CD8-positive, alpha-beta T cell (primary cell): ENCODE measurements at regions of chr3 and their contacts with region 1.

Region 1: DNA sequence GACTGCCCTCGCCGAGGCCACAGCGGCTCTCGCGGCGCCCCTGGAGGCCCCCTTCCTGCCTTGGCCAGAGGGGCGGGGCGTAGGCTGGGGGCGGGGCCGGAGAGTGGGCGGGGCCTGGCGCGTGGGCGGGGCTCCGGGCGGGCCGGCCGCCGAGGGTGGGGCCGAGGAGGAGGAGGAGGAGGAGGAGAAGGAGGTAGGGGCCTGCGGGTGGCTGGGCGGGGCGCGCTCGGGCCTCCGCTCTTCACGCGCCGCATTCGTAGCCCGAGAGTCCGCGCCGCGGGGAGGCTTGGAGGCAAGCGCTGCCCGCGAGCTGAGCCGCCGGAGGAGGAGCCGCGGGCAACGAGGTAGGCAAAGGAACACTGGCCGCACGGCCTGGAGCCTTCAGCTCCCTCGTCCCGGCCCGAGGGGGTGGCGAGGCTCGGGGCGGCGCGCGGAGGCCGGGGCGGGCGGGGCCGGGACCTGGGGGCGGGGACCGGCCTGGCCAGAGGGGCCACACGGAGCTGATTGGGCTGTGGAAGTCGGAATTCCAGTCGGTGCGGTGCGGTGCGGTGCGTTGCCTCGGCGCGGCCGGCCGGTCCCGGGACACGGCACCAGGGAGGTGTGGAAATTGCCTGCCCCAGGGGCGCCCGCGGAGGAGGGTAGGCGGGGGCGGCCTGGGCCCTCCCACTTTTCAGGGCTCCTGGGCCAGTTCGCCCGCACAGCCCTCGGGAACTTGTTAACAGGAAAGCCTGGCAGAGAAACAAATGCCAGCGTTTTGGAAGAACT is at the start of gene PPP2R3A:
- DNase-seq: peak; percentile 40 to 83 (median 61)
- ATAC-seq: peak; percentile 93
- H3K4me3 ChIP-seq: peak within 1 kb of the TSS; percentile 61 to 63
- H3K4me3 Mint-ChIP-seq: peak within 1 kb of the TSS; percentile 81
- H3K27ac ChIP-seq: no peak within 1 kb of the TSS
- H3K27ac Mint-ChIP-seq: peak within 1 kb of the TSS; percentile 25
- H3K4me1 ChIP-seq: peaks cover 10% of the 10 kb centered on the region
- H3K4me1 Mint-ChIP-seq: peaks cover 12% of the 10 kb centered on the region
- H3K27me3 ChIP-seq: peaks cover 0 to 5% of the 10 kb centered on the region in 2 experiments
- H3K27me3 Mint-ChIP-seq: peaks cover 39% of the 10 kb centered on the region
- CTCF ChIP-seq: no peak
- total RNA-seq, gene PPP2R3A: 0.08 to 0.11 TPM

Region 2: DNA sequence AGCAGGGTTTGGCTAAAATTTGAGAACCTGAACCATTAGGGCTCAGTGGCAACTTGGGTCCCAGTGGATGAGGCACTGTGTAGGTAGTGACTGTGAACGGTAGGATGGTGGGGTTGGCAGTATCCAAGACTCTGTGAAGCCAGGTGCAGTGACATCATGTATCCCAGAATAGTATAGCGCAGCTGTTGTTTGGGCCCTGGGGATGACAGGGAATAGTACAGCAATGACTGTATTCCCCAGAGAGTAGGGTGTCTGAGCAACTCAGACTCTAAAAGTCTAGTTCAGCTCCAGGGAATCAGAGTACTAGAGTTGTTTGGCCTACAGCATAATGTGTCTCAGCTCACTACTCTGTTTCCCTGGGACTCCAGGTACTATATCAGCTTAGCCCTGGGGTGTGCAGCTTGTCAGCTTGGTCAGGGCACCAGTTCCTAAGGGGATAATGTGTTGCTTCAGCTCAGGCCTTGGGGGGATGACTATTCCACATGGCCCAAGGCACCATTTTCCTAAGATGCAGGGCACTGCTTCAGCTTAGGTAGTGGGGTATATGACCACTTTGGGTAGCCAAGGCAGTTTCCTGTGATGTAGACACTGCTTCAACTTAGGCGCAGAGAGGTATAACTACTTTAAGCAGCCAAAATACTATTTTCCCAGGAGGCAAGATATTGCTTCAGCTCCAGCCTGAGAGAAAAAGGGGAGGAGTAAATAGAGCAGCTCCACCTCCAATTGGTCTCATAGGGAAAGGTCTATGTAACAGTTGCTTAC is 20.7 kb before region 1 on chr3:
- CTCF ChIA-PET with region 1: no interaction called
- POLR2A ChIA-PET with region 1: interaction called, 3 read pairs
- intact Hi-C with region 1: loop called in 1 of 2 experiments (anchors 1 kb)
- DNase-seq: no peak
- ATAC-seq: no peak
- H3K4me3 ChIP-seq: no peak overlapping the region
- H3K4me3 Mint-ChIP-seq: no peak overlapping the region
- H3K27ac ChIP-seq: no peak overlapping the region
- H3K27ac Mint-ChIP-seq: no peak overlapping the region
- H3K4me1 ChIP-seq: no peaks in the 10 kb centered on the region
- H3K4me1 Mint-ChIP-seq: no peaks in the 10 kb centered on the region
- H3K27me3 ChIP-seq: no peaks in the 10 kb centered on the region
- H3K27me3 Mint-ChIP-seq: peaks cover 24% of the 10 kb centered on the region
- CTCF ChIP-seq: no peak

Region 3: GRCh38 chr3:136109499-136109898 is 143.8 kb after region 1 on chr3:
- CTCF ChIA-PET with region 1: no interaction called
- POLR2A ChIA-PET with region 1: no interaction called
- intact Hi-C with region 1: no loop called
- DNase-seq: no peak
- ATAC-seq: no peak
- H3K4me3 ChIP-seq: no peak overlapping the region
- H3K4me3 Mint-ChIP-seq: no peak overlapping the region
- H3K27ac ChIP-seq: no peak overlapping the region
- H3K27ac Mint-ChIP-seq: no peak overlapping the region
- H3K4me1 ChIP-seq: no peaks in the 10 kb centered on the region
- H3K4me1 Mint-ChIP-seq: peaks cover 9% of the 10 kb centered on the region
- H3K27me3 ChIP-seq: no peaks in the 10 kb centered on the region
- H3K27me3 Mint-ChIP-seq: no peaks in the 10 kb centered on the region
- CTCF ChIP-seq: no peak